HepG2 (cell line): ENCODE measurements at regions of chr9 and their contacts with region 1.

Region 1: DNA sequence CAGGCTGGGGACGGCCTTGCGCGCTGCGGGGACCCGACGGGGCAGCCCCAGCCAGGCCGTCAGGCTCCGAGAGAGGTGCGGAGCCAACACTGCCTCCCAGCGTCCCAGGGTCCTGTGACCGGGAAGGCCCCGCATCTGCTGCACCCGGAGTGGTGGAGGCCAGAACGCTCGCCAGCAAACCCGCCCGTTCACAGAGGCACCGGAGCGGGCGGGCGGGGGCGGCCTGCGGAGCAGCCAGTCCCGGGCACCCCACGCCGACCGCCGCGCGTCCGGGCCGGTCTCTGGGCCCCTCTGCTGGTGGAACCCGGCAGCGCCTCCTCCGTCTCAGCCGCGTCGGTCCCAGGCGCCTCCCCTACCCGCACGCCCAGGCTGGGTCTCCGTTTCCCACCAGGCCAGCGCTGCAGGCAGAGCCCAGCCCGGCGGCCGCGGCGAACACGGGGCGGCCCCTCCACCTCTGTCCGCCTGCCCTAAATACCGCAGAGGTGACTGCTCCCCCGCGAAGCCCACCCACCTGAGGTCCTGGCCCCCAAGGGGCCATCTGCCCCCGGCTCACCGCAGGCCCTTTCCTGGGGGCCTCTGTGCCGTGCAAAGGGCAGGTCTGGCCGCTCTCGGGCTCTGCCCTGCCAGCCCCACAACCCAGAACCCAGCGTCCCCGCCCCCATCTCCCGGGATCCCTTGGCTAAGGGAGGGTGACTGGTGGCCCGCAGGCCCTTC is 15.9 kb downstream of the EXD3 start:
- DNase-seq: peak; percentile 42
- ATAC-seq: peak; percentile 90
- H3K4me3 ChIP-seq: peak overlapping the region; percentile 50 to 69 (median 57)
- H3K27ac ChIP-seq: no peak overlapping the region
- H3K4me1 ChIP-seq: peaks cover 13% of the 10 kb centered on the region
- H3K27me3 ChIP-seq: no peaks in the 10 kb centered on the region
- CTCF ChIP-seq: peak; percentile 85
- EP300 ChIP-seq: no peak
- POLR2A ChIP-seq: no peak
- RAD21 ChIP-seq: peak; percentile 97

Region 2: DNA sequence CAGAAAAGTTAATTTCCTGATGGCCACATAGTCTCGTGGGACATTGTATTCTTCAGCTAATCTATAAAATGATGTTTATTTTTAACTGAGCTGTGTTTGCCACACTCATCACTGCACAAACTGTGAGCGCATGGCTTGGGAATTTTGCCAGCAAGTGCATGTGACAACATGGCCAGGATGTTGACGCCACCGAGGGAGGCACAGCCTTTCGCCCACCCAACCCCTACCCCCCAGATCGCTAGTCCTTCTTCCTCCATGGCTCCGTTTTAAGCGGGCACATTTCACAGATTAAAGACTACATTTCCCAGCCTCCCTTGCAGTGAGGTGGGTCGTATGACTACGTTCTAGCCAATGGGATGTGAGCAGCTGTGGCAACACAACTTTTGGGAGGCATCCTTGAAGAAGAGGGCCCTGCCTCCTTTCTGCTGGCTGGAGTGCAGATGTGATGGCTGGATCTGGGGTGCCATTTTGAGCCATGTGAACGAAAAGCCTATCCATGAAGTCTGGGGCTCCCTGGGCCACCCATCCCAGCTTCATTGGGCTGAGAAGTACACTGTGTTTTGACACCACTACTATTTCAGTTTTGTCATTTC is 112.8 kb before region 1 on chr9:
- CTCF ChIA-PET with region 1: interaction called, 7 read pairs
- POLR2A ChIA-PET with region 1: no interaction called
- in situ Hi-C with region 1: loop called (anchors 5 kb)
- intact Hi-C with region 1: no loop called
- DNase-seq: peak; percentile 80
- ATAC-seq: peak; percentile 70
- H3K4me3 ChIP-seq: peak overlapping the region; percentile 47 to 67 (median 55)
- H3K27ac ChIP-seq: no peak overlapping the region
- H3K4me1 ChIP-seq: peaks cover 62% of the 10 kb centered on the region
- H3K27me3 ChIP-seq: peaks cover 4 to 27% of the 10 kb centered on the region in 2 experiments; a peak in 4 of 5 replicates
- CTCF ChIP-seq: no peak
- EP300 ChIP-seq: no peak
- POLR2A ChIP-seq: no peak
- RAD21 ChIP-seq: no peak

Region 3: DNA sequence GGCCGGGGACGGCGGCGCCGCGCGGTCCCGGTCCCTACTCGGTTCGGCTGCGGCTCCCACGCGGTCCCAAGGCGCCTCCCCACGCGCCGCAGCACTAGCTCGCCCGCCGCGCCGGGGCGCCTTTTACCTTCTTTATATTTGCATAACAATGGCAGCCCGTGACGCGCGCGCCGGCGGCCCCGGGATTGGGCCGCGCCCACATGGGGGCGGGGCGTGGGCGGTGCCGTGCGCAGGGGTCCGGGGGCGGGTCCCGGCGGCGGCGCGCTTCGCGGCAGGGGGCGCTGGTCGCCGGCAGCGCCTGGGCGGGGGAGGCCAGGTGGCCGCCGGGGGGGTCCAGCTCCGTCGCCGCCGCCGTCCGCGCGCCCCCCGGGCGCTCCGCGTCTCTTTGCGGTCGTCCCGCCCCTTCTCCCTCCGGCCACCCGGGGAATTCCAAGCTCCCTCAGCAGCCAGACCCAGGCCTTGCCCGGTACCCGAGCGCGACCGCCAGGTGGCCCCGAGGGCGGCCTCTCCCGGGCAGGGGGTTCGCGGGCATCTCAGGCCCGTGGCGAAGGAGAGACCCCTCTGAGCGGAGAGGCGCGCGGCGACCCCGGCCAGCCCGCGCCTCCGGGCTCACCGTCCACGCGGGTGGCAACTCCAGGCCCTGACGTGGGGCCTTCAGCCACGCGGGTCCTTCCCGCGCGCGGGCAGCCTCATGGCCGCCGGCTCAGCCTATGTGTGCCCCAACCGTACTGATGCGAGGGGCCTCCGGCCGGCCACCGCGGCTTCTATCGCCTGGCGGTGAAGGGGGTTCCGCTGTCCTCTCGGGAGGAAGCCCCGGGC is 104.6 kb before region 1 on chr9 and contains the start of gene NRARP:
- CTCF ChIA-PET with region 1: no interaction called
- POLR2A ChIA-PET with region 1: no interaction called
- in situ Hi-C with region 1: no loop called
- intact Hi-C with region 1: loop called (anchors 10 kb)
- DNase-seq: no peak
- ATAC-seq: peak; percentile 6; the same call in 1 of the 3 replicates
- H3K4me3 ChIP-seq: peak within 1 kb of the TSS; percentile 46 to 63 (median 51); a peak in 5 of 6 replicates
- H3K27ac ChIP-seq: no peak within 1 kb of the TSS
- H3K4me1 ChIP-seq: peaks cover 71% of the 10 kb centered on the region
- H3K27me3 ChIP-seq: peaks cover 14 to 77% of the 10 kb centered on the region in 2 experiments
- CTCF ChIP-seq: peak; percentile 34
- EP300 ChIP-seq: no peak
- POLR2A ChIP-seq: no peak
- RAD21 ChIP-seq: no peak
- total RNA-seq, gene NRARP: 0.14 and 0.22 TPM in 2 replicates

Region 4: DNA sequence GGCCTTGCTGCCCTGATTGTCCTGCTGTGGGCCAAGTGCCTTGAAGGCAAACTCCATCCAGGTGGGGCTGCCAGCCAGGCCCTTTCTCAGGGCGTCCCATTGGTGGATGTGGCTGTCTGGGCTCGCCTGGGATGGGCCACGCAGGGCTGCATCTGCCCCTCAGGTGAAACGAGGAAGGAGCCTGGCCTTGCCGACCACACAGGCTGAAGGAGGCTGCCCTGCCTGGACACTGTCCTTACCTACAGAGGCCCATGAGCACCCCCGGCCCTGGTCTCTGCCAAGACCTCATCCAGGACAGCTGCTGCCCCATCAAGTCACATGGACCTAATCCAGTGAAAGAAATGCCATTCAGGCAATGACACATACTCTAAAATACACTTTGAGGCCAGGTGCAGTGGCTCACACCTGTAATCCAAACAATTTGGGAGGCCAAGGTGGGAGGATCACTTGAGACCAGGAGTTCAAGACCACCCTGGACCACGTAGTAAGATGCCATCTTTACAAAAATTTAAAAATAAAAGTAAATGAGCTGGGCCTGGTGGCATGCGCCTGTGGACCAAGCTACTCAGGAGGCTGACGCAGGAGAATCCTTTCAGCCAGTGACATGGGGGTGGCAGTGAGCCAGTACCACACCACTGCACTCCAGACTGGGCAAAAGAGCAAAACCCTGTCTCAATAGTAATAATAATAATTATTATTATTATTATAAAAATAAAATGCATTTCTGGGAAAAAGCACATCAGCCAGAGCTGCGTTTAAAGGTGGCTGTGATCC is 109.3 kb after region 1 on chr9:
- CTCF ChIA-PET with region 1: no interaction called
- POLR2A ChIA-PET with region 1: no interaction called
- in situ Hi-C with region 1: no loop called
- intact Hi-C with region 1: no loop called
- DNase-seq: no peak
- ATAC-seq: peak; percentile 44
- H3K4me3 ChIP-seq: no peak overlapping the region
- H3K27ac ChIP-seq: no peak overlapping the region
- H3K4me1 ChIP-seq: no peaks in the 10 kb centered on the region
- H3K27me3 ChIP-seq: no peaks in the 10 kb centered on the region
- CTCF ChIP-seq: no peak
- EP300 ChIP-seq: no peak
- POLR2A ChIP-seq: no peak
- RAD21 ChIP-seq: no peak